Transverse colon (tissue), 4 donors: ENCODE measurements at regions of chr11 and their contacts with region 1.

Region 1: DNA sequence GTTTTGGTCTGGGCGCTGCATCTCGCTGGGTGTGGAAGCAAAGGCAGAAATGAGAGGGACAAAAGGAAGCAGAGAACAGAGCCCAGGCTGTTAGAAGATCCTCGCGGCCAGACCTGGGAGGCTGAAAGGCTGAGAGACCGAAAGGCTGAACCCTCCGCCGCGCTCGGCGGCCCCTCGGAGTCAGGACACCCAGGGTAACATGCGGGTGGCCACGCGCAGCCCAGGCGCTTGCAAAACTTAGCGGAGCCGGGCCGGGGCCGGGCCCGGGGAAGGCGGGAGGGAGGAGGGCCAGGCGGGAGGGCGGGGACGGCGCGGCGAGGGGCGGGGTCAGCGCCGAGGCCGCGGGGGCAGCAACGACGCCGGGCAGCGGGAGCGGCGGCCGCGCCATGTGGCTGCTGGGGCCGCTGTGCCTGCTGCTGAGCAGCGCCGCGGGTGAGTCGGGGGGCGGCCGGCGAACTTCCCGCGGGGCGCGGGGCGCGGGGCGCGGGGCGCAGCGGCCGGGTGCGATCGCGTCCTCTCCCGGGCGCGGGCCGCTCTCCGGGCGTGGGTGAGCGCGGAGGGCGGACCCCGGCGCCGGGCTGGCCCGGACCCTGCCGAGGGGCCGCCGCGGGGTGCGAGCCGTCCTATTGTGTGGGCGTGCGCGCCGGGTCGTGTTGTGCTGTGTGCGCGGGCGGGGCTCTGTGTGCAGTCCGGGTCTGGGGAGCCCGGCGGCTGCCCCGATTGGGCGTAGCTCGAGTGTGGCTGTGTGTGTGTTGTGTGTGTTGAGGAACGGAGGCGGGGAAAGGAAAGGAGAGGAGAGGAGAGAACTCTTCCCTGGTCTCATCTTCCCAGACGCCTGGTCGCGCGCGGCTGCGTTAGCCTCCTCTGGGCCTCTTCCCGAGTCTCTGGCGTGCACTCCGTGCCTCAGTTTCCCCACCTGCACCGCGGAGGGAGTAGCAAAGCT is at the start of gene LDLRAD3:
- DNase-seq: peak; percentile 69
- H3K4me3 ChIP-seq: peak within 1 kb of the TSS; percentile 39 to 58 (median 53)
- H3K27ac ChIP-seq: peak within 1 kb of the TSS; percentile 62 to 74 (median 64)
- H3K4me1 ChIP-seq: peaks cover 3 to 15% (median 12%) of the 10 kb centered on the region in 4 donors
- H3K27me3 ChIP-seq: peaks cover 16% of the 10 kb centered on the region
- CTCF ChIP-seq: no peak
- EP300 ChIP-seq: no peak
- POLR2A ChIP-seq: no peak
- total RNA-seq, gene LDLRAD3: 0.37 to 43.2 (median 3.7) TPM

Region 2: DNA sequence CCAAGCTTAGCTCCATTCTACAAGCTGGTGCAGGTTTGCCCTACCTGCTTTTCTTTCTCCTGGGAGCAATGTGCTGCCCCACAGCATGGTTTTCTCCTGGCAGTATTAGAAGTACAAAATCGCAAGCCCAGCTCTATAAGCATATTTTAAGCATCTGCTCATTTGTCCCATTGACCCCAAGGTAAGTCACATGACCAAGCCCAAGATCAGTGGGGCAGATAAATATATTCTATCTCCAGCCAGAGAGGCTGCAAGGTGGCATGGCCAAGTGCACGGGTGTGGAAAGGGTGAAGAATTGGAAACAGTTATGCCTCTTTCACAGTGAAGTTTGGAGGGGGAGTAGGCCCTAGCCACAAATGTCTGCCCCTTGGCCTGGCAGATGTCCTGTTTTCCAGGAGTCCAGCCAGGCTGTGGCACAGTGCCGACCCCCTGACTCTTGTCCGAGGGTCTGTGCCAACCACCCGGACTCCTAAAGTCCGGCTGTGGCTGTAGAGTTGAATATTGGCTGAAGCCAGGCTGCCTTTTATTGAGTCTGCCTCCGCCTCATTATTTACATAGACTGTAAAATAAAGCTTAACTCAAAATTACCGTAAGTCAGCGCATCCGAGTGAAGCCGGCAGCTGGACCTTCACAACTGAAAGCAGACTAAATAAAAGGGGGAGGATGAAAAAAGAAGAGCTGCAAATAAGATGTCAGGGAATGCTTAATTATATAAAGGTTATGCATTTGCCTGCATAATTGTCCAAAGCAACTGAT is 179.5 kb after region 1 on chr11:
- in situ Hi-C with region 1: no loop called
- intact Hi-C with region 1: loop called (anchors 10 kb)
- DNase-seq: no peak
- H3K4me3 ChIP-seq: no peak overlapping the region
- H3K27ac ChIP-seq: no peak overlapping the region
- H3K4me1 ChIP-seq: no peaks in the 10 kb centered on the region
- H3K27me3 ChIP-seq: no peaks in the 10 kb centered on the region
- CTCF ChIP-seq: no peak
- EP300 ChIP-seq: no peak
- POLR2A ChIP-seq: no peak

Region 3: DNA sequence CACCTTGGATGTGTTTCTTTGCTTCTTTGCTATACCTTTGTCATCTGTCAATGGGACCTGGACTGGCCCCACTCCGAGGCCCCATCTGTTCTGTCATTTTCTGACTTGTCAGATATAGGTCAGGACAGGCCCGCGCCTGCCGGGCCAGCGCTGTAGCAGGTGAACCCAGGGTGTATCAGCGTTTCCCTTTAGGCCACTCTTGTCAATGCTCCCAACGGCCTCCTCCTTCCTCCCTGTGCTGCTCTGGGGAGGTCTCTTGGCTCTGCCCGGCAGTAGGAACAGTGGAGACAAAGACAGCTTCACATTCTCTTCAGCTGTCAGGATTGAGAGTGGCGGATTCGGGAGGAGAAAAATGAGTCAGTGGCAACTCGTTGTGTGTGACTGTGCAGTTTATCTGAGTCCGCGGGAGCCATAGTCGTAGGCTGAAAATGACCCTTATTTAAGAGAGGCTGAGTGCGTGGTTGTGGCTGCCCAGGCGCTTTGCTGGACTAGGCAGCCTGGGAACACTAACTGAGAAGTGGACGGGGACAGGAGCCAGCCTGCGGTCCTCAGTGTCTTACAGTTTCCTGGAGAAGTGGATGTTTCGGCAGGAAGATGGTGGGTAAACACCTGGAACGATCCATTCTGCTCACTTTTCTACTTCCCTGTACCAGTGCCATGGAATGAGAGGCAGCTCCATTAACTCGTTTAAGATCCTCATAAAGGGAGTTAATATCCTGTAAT is 454.4 kb after region 1 on chr11:
- in situ Hi-C with region 1: no loop called
- intact Hi-C with region 1: no loop called
- DNase-seq: no peak
- H3K4me3 ChIP-seq: no peak overlapping the region
- H3K27ac ChIP-seq: no peak overlapping the region
- H3K4me1 ChIP-seq: peaks cover 0 to 16% (median 8%) of the 10 kb centered on the region in 4 donors
- H3K27me3 ChIP-seq: no peaks in the 10 kb centered on the region
- CTCF ChIP-seq: no peak
- EP300 ChIP-seq: no peak
- POLR2A ChIP-seq: no peak

Region 4: GRCh38 chr11:36693139-36693843 is 749.3 kb after region 1 on chr11:
- in situ Hi-C with region 1: no loop called
- intact Hi-C with region 1: loop called (anchors 5 kb)
- DNase-seq: no peak
- H3K4me3 ChIP-seq: no peak overlapping the region
- H3K27ac ChIP-seq: no peak overlapping the region
- H3K4me1 ChIP-seq: no peaks in the 10 kb centered on the region
- H3K27me3 ChIP-seq: no peaks in the 10 kb centered on the region
- CTCF ChIP-seq: no peak
- EP300 ChIP-seq: no peak
- POLR2A ChIP-seq: no peak